Breast epithelium (tissue), 4 donors: ENCODE measurements at regions of chr6 and their contacts with region 1.

Region 1: DNA sequence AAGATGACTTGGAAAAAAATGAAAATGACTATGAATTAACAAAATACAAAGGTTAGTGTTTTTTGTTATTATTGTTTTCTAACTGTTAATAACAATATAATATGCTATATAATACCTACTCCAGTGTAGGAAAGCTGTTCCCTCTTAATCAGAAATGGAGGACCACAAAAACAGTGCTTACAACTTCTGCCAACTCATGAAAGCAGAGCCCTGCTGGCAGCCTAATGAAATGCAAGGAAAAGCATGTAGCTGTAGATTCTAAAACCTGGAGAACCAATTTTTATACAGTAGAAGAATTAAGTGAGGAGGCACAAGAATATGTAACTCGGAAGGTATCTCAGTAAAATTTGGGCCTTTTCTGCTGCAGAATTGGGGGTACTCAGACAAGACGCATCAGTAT is 29.4 kb downstream of the PHIP start:
- DNase-seq: no peak
- H3K4me3 ChIP-seq: no peak overlapping the region
- H3K27ac ChIP-seq: no peak overlapping the region
- H3K4me1 ChIP-seq: no peaks in the 10 kb centered on the region
- H3K27me3 ChIP-seq: no peaks in the 10 kb centered on the region
- CTCF ChIP-seq: no peak
- POLR2A ChIP-seq: no peak

Region 2: GRCh38 chr6:79627422-79627821 is 578.8 kb after region 1 on chr6:
- intact Hi-C with region 1: loop called (anchors 5 kb)
- DNase-seq: no peak
- H3K4me3 ChIP-seq: no peak overlapping the region
- H3K27ac ChIP-seq: no peak overlapping the region
- H3K4me1 ChIP-seq: no peaks in the 10 kb centered on the region
- H3K27me3 ChIP-seq: no peaks in the 10 kb centered on the region
- CTCF ChIP-seq: no peak
- POLR2A ChIP-seq: no peak